OCI-LY7 (cell line): ENCODE measurements at regions of chr17 and their contacts with region 1.

Region 1: DNA sequence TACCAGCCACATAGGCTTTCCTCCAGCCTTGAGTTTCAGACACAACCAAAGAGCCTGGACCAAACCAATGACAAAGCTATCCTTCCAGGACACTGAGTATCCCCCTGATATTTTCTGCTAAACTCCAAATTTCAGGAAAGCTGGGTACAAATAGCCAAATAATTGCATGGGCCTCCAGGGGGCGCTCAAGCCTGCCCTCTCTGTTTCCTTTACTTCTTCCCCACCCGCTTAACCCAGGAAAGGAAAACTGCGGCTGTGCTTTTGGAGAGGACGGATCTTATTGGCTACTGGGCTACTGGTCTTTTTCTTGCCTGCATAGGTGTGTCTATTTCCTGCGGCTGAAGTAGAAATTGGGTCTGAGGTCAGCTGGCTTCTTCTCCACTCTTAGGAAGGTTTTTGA is 30.1 kb downstream of the GNGT2 start:
- DNase-seq: peak; percentile 65
- H3K4me3 ChIP-seq: no peak overlapping the region
- H3K27ac ChIP-seq: no peak overlapping the region
- H3K4me1 ChIP-seq: peaks cover 6% of the 10 kb centered on the region
- CTCF ChIP-seq: peak; percentile 97

Region 2: GRCh38 chr17:48990882-48991357 is 189.4 kb before region 1 on chr17:
- CTCF ChIA-PET with region 1: no interaction called
- POLR2A ChIA-PET with region 1: no interaction called
- intact Hi-C with region 1: no loop called
- DNase-seq: no peak
- H3K4me3 ChIP-seq: no peak overlapping the region
- H3K27ac ChIP-seq: no peak overlapping the region
- H3K4me1 ChIP-seq: peaks cover 7% of the 10 kb centered on the region
- CTCF ChIP-seq: no peak

Region 3: GRCh38 chr17:49146620-49147306 is 33.5 kb before region 1 on chr17:
- CTCF ChIA-PET with region 1: no interaction called
- POLR2A ChIA-PET with region 1: no interaction called
- intact Hi-C with region 1: no loop called
- DNase-seq: no peak
- H3K4me3 ChIP-seq: no peak overlapping the region
- H3K27ac ChIP-seq: no peak overlapping the region
- H3K4me1 ChIP-seq: no peaks in the 10 kb centered on the region
- CTCF ChIP-seq: no peak

Region 4: GRCh38 chr17:49230636-49231562 is 50.6 kb after region 1 on chr17 and contains the start of gene PHOSPHO1:
- CTCF ChIA-PET with region 1: interaction called, 11 read pairs
- POLR2A ChIA-PET with region 1: no interaction called
- intact Hi-C with region 1: loop called (anchors 1 kb)
- DNase-seq: peak; percentile 90
- H3K4me3 ChIP-seq: peak within 1 kb of the TSS; percentile 67
- H3K27ac ChIP-seq: no peak within 1 kb of the TSS
- H3K4me1 ChIP-seq: peaks cover 9% of the 10 kb centered on the region
- CTCF ChIP-seq: no peak
- total RNA-seq, gene PHOSPHO1: not detected in 2 replicates

Region 5: DNA sequence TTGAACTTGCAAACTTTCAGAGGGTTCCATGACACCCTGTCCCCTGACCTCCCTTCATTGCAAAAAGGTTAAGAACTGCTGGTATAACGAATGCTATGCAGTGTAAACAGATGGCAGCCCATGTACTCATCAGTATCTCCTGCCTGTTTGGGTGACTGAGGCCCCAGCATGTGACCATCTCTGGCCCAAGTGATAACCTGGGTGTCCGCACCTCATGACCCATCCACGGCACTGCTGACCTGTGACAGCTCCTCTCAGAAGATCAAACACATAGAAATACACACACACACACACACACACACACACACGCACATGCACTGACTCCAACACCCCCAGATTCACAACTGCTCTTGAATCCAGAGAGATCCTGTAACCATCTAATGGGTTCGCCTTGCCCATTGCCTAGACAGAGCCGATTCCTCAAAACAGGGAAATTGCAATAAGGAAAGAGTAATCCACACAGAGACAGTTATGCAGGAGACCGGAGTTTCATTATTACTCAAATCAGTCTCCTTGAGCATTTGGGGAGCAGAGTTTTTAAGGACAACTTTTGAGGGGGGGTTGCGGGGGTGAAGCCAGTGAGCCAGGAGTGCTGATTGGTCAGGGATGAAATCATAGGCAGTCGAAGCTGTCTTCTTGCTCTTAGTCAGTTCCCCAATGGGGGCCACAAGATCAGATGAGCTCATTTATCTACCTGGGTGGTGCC is 61.5 kb after region 1 on chr17:
- CTCF ChIA-PET with region 1: no interaction called
- POLR2A ChIA-PET with region 1: no interaction called
- intact Hi-C with region 1: no loop called
- DNase-seq: no peak
- H3K4me3 ChIP-seq: no peak overlapping the region
- H3K27ac ChIP-seq: no peak overlapping the region
- H3K4me1 ChIP-seq: no peaks in the 10 kb centered on the region
- CTCF ChIP-seq: no peak

Region 6: DNA sequence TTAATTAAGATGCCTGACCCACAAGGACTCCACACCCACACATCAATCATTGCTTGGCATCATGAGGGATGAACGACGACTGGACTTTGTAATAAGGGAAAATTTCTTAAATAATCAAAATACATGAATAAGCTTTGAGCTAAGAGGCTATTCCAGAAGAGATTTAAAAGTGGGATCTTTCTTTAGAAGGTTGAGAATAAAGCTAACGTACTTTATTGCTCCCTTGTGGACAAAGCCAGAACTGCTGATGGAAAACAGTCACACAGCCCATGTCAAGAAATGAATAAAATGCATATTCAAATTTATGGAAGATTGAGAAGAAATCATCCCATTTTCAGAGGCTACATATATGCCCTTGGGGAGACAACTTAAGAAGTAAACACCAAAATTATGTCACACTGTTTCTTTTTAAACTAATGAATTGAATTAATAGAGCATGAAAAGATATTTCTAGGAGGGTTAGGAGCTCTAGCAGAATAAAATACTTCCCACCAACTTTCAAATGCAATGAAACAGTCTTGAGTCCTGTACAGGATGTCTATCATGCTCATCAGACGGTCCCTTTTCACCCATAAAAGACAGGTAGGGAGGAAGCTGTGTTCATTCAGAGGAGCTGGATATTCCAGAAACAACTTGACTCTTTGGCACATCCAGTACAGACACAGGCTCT is 110.5 kb after region 1 on chr17:
- CTCF ChIA-PET with region 1: no interaction called
- POLR2A ChIA-PET with region 1: no interaction called
- intact Hi-C with region 1: loop called (anchors 2 kb)
- DNase-seq: peak; percentile 41
- H3K4me3 ChIP-seq: no peak overlapping the region
- H3K27ac ChIP-seq: no peak overlapping the region
- H3K4me1 ChIP-seq: no peaks in the 10 kb centered on the region
- CTCF ChIP-seq: peak; percentile 84